ENCODE measurements at regions of chr15 and their contacts with region 1.

Region 1: GRCh38 chr15:67863442-67863987 is 23.7 kb upstream of the RNU6-1 start:
- DNase-seq: peak; percentile 92
- H3K4me3 ChIP-seq: peak overlapping the region; percentile 22 to 47 (median 40)
- H3K27ac ChIP-seq: peak overlapping the region; percentile 66 to 82 (median 74)
- H3K4me1 ChIP-seq: peaks cover 0 to 24% (median 8%) of the 10 kb centered on the region in 4 donors
- H3K27me3 ChIP-seq: no peaks in the 10 kb centered on the region
- CTCF ChIP-seq: peak; percentile 89 to 95 (median 91)
- EP300 ChIP-seq: no peak
- POLR2A ChIP-seq: no peak

Region 2: DNA sequence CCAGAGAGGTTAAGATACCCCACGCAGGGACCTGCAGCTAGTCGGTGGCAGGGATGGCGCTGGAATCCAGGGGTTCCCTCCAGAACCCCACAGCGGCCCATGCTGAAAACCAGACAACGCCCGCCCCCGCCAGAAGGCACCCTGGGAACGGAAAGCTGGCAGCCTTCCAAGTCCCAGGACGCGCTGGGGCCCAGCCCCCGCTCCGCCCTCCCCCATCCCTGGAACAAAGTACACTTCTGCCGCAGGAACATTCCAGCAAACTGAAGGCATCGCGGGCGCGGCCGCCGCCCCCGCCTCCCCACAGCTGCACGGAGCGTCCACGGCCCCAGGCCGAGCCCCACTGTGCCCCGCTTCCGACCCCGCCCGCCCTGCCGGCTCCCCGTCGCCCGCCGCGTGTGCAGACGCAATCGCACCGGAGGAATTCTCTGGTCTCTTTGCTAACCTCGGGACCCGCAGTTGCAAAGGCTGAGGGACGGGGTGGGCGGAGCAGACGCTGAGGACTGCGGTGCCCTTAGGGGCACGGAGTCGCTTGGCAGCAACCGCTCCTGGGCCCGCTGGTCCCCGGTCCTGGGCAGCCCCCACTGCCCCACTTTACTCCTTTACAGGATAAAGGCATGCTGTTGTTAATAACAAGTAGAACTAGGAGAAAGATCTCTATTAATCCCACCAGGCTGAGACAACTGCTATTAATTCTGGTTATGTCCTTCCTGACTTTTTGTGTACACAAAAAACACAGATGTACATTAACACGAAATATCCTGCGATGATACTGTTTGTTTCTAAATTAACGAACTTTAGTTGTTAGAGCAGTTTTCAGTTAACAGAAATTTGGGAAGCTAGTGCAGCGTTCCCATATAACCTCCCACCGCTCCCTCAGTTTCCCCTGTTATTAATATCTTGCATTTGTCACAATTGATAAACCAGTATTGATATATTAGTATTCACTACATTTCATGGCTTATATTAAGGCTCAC is 21.3 kb after region 1 on chr15:
- intact Hi-C with region 1: no loop called
- DNase-seq: peak; percentile 93
- H3K4me3 ChIP-seq: peak overlapping the region; percentile 29 to 60 (median 54)
- H3K27ac ChIP-seq: peak overlapping the region; percentile 82 to 90 (median 86)
- H3K4me1 ChIP-seq: peaks cover 0 to 37% (median 30%) of the 10 kb centered on the region in 4 donors
- H3K27me3 ChIP-seq: no peaks in the 10 kb centered on the region
- CTCF ChIP-seq: no peak
- EP300 ChIP-seq: peak in 2 of 4 donors; percentile 4 to 63
- POLR2A ChIP-seq: no peak

Region 3: GRCh38 chr15:67914537-67915460 is 51.3 kb after region 1 on chr15:
- intact Hi-C with region 1: loop called (anchors 5 kb)
- DNase-seq: peak; percentile 92
- H3K4me3 ChIP-seq: peak overlapping the region in 3 of 4 donors; percentile 7 to 24 (median 18)
- H3K27ac ChIP-seq: peak overlapping the region; percentile 87 to 91 (median 88)
- H3K4me1 ChIP-seq: peaks cover 0 to 73% (median 46%) of the 10 kb centered on the region in 4 donors
- H3K27me3 ChIP-seq: no peaks in the 10 kb centered on the region
- CTCF ChIP-seq: no peak
- EP300 ChIP-seq: peak in 1 of 4 donors; percentile 32
- POLR2A ChIP-seq: no peak

Region 4: GRCh38 chr15:68053701-68054627 is 190.4 kb after region 1 on chr15 and contains the start of gene PIAS1:
- intact Hi-C with region 1: loop called (anchors 5 kb)
- DNase-seq: peak; percentile 97
- H3K4me3 ChIP-seq: peak within 1 kb of the TSS; percentile 98 to 100 (median 99)
- H3K27ac ChIP-seq: peak within 1 kb of the TSS; percentile 97 to 99 (median 98)
- H3K4me1 ChIP-seq: peaks cover 0 to 39% (median 33%) of the 10 kb centered on the region in 4 donors
- H3K27me3 ChIP-seq: no peaks in the 10 kb centered on the region
- CTCF ChIP-seq: no peak
- EP300 ChIP-seq: no peak
- POLR2A ChIP-seq: peak; percentile 89 to 91
- total RNA-seq, gene PIAS1: 55.9 to 75.4 (median 66.9) TPM

Region 5: GRCh38 chr15:68154923-68155559 is 291.5 kb after region 1 on chr15:
- intact Hi-C with region 1: loop called (anchors 2 kb)
- DNase-seq: no peak
- H3K4me3 ChIP-seq: no peak overlapping the region
- H3K27ac ChIP-seq: peak overlapping the region in 3 of 4 donors; percentile 8 to 81 (median 25)
- H3K4me1 ChIP-seq: peaks cover 0 to 63% (median 42%) of the 10 kb centered on the region in 4 donors
- H3K27me3 ChIP-seq: no peaks in the 10 kb centered on the region
- CTCF ChIP-seq: peak; percentile 61 to 76 (median 73)
- EP300 ChIP-seq: no peak
- POLR2A ChIP-seq: no peak

Region 6: GRCh38 chr15:68210821-68211655 is 347.5 kb after region 1 on chr15:
- intact Hi-C with region 1: loop called (anchors 2 kb)
- DNase-seq: peak; percentile 87
- H3K4me3 ChIP-seq: peak overlapping the region in 3 of 4 donors; percentile 27 to 37 (median 35)
- H3K27ac ChIP-seq: peak overlapping the region in 3 of 4 donors; percentile 32 to 60 (median 54)
- H3K4me1 ChIP-seq: peaks cover 0 to 20% (median 18%) of the 10 kb centered on the region in 4 donors
- H3K27me3 ChIP-seq: no peaks in the 10 kb centered on the region
- CTCF ChIP-seq: peak; percentile 93 to 97 (median 94)
- EP300 ChIP-seq: no peak
- POLR2A ChIP-seq: no peak